Left ventricle myocardium superior (tissue), 1 donor: ENCODE measurements at regions of chr4 and their contacts with region 1.

Region 1: GRCh38 chr4:107824353-107825071 is at the start of gene SGMS2:
- DNase-seq: peak; percentile 89
- ATAC-seq: peak; percentile 96
- total RNA-seq, gene SGMS2: 23.1 TPM

Region 2: GRCh38 chr4:107896158-107897045 is 71.9 kb after region 1 on chr4:
- intact Hi-C with region 1: loop called (anchors 10 kb)
- DNase-seq: no peak
- ATAC-seq: peak; percentile 59